IMR-90 (cell line): ENCODE measurements at regions of chr5 and their contacts with region 1.

Region 1: DNA sequence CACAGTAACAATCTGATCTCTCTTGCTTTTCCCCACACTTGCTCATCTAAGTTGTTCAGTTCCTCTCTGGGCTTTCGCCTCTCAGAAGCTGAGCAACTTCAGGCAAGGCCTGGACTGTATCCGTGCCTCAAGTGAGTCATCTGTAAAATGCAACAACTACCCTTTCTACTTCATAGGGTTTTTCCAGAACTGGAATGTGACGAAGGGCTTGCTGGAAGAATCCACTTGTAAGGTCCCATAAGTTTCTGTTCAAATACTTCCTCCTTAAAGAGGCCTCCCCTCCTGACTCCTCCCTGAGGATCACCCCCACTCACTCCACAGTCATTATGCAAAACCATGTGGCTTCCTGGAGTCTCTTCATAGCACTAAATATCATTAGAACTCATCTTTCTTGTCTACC is 17.5 kb upstream of the INSYN2B start:
- DNase-seq: no peak
- ATAC-seq: no peak
- H3K4me3 ChIP-seq: no peak overlapping the region
- H3K27ac ChIP-seq: no peak overlapping the region
- H3K4me1 ChIP-seq: no peaks in the 10 kb centered on the region
- H3K27me3 ChIP-seq: no peaks in the 10 kb centered on the region; the same call in 1 of the 2 replicates
- CTCF ChIP-seq: no peak
- POLR2A ChIP-seq: no peak
- RAD21 ChIP-seq: no peak

Region 2: GRCh38 chr5:169050146-169050571 is 947.6 kb before region 1 on chr5:
- CTCF ChIA-PET with region 1: no interaction called
- POLR2A ChIA-PET with region 1: no interaction called
- dilution Hi-C with region 1: no loop called
- in situ Hi-C with region 1: no loop called
- intact Hi-C with region 1: loop called (anchors 5 kb)
- DNase-seq: no peak
- ATAC-seq: no peak
- H3K4me3 ChIP-seq: no peak overlapping the region
- H3K27ac ChIP-seq: no peak overlapping the region
- H3K4me1 ChIP-seq: no peaks in the 10 kb centered on the region
- H3K27me3 ChIP-seq: no peaks in the 10 kb centered on the region
- CTCF ChIP-seq: no peak
- POLR2A ChIP-seq: no peak
- RAD21 ChIP-seq: no peak

Region 3: GRCh38 chr5:170046241-170046640 is 48.4 kb after region 1 on chr5:
- CTCF ChIA-PET with region 1: no interaction called
- POLR2A ChIA-PET with region 1: no interaction called
- dilution Hi-C with region 1: no loop called
- in situ Hi-C with region 1: no loop called
- intact Hi-C with region 1: no loop called
- DNase-seq: no peak
- ATAC-seq: no peak
- H3K4me3 ChIP-seq: no peak overlapping the region
- H3K27ac ChIP-seq: no peak overlapping the region
- H3K4me1 ChIP-seq: no peaks in the 10 kb centered on the region
- H3K27me3 ChIP-seq: peaks cover 4% of the 10 kb centered on the region; the same call in 1 of the 2 replicates
- CTCF ChIP-seq: no peak
- POLR2A ChIP-seq: no peak
- RAD21 ChIP-seq: no peak